ENCODE measurements at regions of chr5 and their contacts with region 1.

Region 1: GRCh38 chr5:32092938-32093812 is 80.9 kb downstream of the GOLPH3 start:
- DNase-seq: peak; percentile 38
- H3K4me3 Mint-ChIP-seq: no peak overlapping the region
- H3K27ac Mint-ChIP-seq: no peak overlapping the region
- H3K4me1 Mint-ChIP-seq: no peaks in the 10 kb centered on the region
- H3K27me3 Mint-ChIP-seq: no peaks in the 10 kb centered on the region

Region 2: DNA sequence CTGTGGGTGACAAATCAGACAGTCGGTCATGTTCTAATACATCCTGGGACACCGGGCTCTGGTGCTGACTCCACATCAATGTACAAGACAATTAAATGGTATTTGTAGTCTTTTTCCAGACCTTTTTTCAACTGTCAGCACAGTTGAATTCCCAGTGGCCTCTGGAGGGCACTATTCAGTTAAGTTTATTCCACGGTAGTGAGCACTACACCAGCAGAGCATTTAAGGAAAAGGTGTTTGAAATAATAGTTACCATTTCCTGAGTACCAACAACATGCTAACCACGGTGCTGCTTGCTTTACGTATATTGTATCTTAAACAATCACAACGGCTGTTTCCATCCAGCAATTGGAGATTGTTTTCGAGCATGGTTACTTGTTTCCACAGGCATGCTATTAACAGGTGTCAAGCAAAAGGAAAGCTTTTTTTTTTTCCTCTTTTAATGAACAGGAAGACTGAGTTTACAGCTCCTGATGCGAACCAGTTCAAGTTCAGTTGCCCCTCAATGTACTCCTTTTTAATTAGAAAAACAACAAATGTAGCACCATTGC is 267.6 kb before region 1 on chr5:
- intact Hi-C with region 1: loop called (anchors 1 kb)
- DNase-seq: peak; percentile 5
- H3K4me3 Mint-ChIP-seq: no peak overlapping the region
- H3K27ac Mint-ChIP-seq: no peak overlapping the region
- H3K4me1 Mint-ChIP-seq: peaks cover 4% of the 10 kb centered on the region
- H3K27me3 Mint-ChIP-seq: peaks cover 3% of the 10 kb centered on the region

Region 3: DNA sequence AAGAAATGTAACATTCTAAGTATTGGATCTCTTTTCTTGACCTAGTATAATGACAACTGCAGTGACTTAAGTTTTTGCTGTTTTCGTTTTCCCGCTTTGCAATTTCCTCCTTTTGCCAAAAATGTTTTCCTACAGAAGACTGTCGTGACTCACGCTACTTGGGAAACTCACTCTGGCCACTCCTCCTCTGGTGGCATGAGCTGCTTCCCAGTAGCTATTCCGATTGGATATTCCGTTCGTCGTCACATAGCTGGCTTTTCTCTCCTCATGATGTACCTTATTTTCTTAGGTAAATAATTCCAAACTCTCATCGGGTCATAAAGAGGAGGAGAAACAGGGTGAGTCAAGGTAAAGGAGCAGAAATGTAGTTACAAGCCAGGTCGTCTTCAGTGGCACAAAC is 16.1 kb after region 1 on chr5:
- intact Hi-C with region 1: no loop called
- DNase-seq: no peak
- H3K4me3 Mint-ChIP-seq: no peak overlapping the region
- H3K27ac Mint-ChIP-seq: no peak overlapping the region
- H3K4me1 Mint-ChIP-seq: peaks cover 6% of the 10 kb centered on the region
- H3K27me3 Mint-ChIP-seq: no peaks in the 10 kb centered on the region

Measured in activated T-helper 1 cell treated with anti-CD3 and anti-CD28 coated beads, Interleukin-12 subunit alpha, Interleukin-12 subunit beta, Interleukin-2, Interleukin-4 antibody, amounts not matched to agents 30 ng/mL and 10 ng/mL and 1 ng/mL, durations not matched to agents 14 hours and 24 hours and 36 hours (primary cell).